ENCODE measurements at regions of chr20 and their contacts with region 1.

Region 1: GRCh38 chr20:49028684-49029083 is 17.4 kb upstream of the CSE1L start:
- DNase-seq: peak; percentile 13
- H3K4me3 ChIP-seq: no peak overlapping the region
- H3K27ac ChIP-seq: no peak overlapping the region
- H3K4me1 ChIP-seq: no peaks in the 10 kb centered on the region
- H3K27me3 ChIP-seq: no peaks in the 10 kb centered on the region
- CTCF ChIP-seq: peak; percentile 26 to 49

Region 2: GRCh38 chr20:49046087-49046900 is 17.6 kb after region 1 on chr20 and contains the start of gene CSE1L:
- CTCF ChIA-PET with region 1: no interaction called
- dilution Hi-C with region 1: no loop called
- in situ Hi-C with region 1: no loop called
- intact Hi-C with region 1: loop called (anchors 2 kb)
- DNase-seq: peak; percentile 93
- H3K4me3 ChIP-seq: peak within 1 kb of the TSS; percentile 73 to 100 (median 87)
- H3K27ac ChIP-seq: peak within 1 kb of the TSS; percentile 88
- H3K4me1 ChIP-seq: peaks cover 26% of the 10 kb centered on the region
- H3K27me3 ChIP-seq: no peaks in the 10 kb centered on the region
- CTCF ChIP-seq: no peak
- total RNA-seq, gene CSE1L: 83.5 to 114 TPM

Measured in mammary epithelial cell (primary cell).